ENCODE measurements at regions of chr10 and their contacts with region 1.

Region 1: GRCh38 chr10:97686962-97687784 is at the start of gene AVPI1:
- DNase-seq: peak; percentile 91
- H3K4me3 ChIP-seq: peak within 1 kb of the TSS; percentile 71
- H3K27ac ChIP-seq: peak within 1 kb of the TSS; percentile 100
- H3K27me3 ChIP-seq: no peaks in the 10 kb centered on the region
- CTCF ChIP-seq: no peak
- polyA plus RNA-seq, gene AVPI1: 26.5 and 36.9 TPM in 2 replicates

Region 2: DNA sequence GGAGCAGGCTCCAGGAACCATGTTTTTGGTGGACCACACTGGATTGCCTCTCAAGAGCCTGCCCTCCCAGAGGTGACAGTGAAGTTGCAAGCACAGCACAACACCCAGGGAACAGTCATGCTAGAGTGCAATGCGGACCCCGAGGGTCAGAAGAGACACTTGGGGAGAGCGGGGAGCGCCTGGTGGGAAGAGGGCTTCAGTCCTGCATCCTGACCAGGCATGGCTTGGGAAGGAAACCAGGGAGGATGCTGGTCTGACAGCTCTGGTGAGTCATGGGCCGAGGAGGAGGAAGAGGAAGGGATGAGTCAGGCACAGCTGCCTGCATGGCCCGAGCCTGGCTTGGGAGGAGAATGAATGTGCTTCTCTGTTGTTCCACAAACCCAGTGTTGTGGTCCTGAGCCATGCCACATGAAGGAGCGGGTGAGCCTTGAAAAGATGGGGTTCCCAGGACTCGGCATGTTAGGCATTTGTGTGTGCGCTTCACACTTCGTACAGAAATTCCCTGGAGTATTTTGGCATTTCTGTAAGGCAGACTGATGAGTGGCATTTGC is 144.1 kb before region 1 on chr10:
- CTCF ChIA-PET with region 1: no interaction called
- POLR2A ChIA-PET with region 1: no interaction called
- DNase-seq: peak; percentile 84
- H3K4me3 ChIP-seq: peak overlapping the region; percentile 3; the same call in 1 of the 2 replicates
- H3K27ac ChIP-seq: peak overlapping the region; percentile 99
- H3K27me3 ChIP-seq: no peaks in the 10 kb centered on the region
- CTCF ChIP-seq: no peak

Region 3: GRCh38 chr10:97640174-97640867 is 46.9 kb before region 1 on chr10 and contains the start of gene PI4K2A:
- CTCF ChIA-PET with region 1: interaction called, 3 read pairs
- POLR2A ChIA-PET with region 1: interaction called, 19 read pairs
- DNase-seq: peak; percentile 98
- H3K4me3 ChIP-seq: peak within 1 kb of the TSS; percentile 83
- H3K27ac ChIP-seq: peak within 1 kb of the TSS; percentile 73
- H3K27me3 ChIP-seq: no peaks in the 10 kb centered on the region
- CTCF ChIP-seq: no peak
- polyA plus RNA-seq, gene PI4K2A: 35.6 and 36.1 TPM in 2 replicates

Region 4: DNA sequence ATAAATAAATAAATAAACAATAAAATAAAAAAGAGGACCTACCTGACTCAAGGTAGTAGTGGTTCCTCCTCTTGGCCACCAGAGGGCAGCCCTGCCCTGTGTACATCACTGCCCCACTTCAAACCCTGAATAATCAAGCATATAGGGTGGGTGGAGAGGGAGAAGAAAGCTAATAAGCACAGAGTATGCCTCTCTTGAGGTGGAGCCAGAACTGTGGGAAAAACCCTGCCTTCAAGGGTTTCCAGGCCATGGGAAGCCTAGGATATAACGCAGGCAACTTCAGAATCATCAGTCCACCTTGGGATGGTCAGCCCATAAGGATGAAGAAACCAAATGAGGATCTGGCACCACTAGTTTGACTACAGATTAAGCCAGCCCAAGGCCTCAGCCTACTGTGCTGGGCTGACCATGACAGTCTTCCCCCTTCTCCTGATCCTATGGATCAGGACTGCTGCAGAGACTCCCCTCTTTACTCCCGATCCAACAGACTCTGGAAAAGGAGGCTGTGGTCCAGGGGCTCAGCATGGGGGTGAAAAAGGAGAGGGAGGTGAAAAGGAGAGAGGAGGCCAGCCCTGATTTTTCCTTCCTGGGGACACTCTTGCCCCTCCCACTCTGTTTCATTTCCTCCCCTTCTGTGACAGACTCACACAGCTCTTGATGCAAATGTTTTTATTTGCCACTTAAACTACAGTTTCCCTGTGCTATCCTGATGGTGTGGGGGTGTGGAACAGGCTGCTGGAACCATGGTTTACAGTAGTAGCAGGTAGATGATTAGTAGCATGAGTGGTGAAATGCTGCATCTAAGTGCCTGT is 10.2 kb before region 1 on chr10:
- CTCF ChIA-PET with region 1: interaction called, 37 read pairs
- POLR2A ChIA-PET with region 1: interaction called, 8 read pairs
- DNase-seq: no peak
- H3K4me3 ChIP-seq: no peak overlapping the region
- H3K27ac ChIP-seq: peak overlapping the region; percentile 21
- H3K27me3 ChIP-seq: no peaks in the 10 kb centered on the region
- CTCF ChIP-seq: peak; percentile 87

Region 5: GRCh38 chr10:97714048-97714371 is 26.8 kb after region 1 on chr10:
- CTCF ChIA-PET with region 1: interaction called, 29 read pairs
- POLR2A ChIA-PET with region 1: interaction called, 52 read pairs
- DNase-seq: no peak
- H3K4me3 ChIP-seq: peak overlapping the region; percentile 94
- H3K27ac ChIP-seq: peak overlapping the region; percentile 75
- H3K27me3 ChIP-seq: no peaks in the 10 kb centered on the region
- CTCF ChIP-seq: peak; percentile 20; the same call in 1 of the 2 replicates

Region 6: GRCh38 chr10:97731346-97732051 is 44.3 kb after region 1 on chr10:
- CTCF ChIA-PET with region 1: interaction called, 31 read pairs
- POLR2A ChIA-PET with region 1: interaction called, 16 read pairs
- DNase-seq: peak; percentile 61
- H3K4me3 ChIP-seq: no peak overlapping the region
- H3K27ac ChIP-seq: no peak overlapping the region
- H3K27me3 ChIP-seq: no peaks in the 10 kb centered on the region
- CTCF ChIP-seq: peak; percentile 91